CD8-positive, alpha-beta T cell (primary cell): ENCODE measurements at regions of chr1 and their contacts with region 1.

Region 1: DNA sequence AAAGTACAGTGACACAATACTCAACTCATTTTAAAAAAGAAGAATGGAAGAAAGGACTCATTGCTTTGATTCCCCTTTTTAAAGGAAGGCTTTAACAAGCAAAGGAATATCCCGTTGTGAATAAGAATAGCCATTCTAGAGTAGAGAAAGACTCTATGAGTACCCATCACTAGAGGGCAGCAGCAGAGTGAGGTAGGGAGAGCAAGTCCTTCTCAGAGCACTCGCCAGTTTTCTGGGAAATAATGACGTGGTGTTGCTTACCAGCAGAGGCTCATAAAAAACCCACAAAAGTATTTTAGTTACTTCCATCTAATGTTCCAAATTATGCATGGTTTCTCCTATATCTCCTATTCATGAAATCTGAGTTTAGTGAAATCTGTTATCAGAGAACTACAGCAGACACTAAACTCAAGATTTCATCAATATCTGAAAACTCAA is 74.6 kb downstream of the USP24 start:
- DNase-seq: peak; percentile 25 to 88 (median 69)
- ATAC-seq: peak; percentile 94
- H3K4me3 ChIP-seq: no peak overlapping the region
- H3K4me3 Mint-ChIP-seq: no peak overlapping the region
- H3K27ac ChIP-seq: no peak overlapping the region
- H3K27ac Mint-ChIP-seq: peak overlapping the region; percentile 53
- H3K4me1 ChIP-seq: no peaks in the 10 kb centered on the region
- H3K4me1 Mint-ChIP-seq: peaks cover 15% of the 10 kb centered on the region
- H3K27me3 ChIP-seq: no peaks in the 10 kb centered on the region
- H3K27me3 Mint-ChIP-seq: no peaks in the 10 kb centered on the region
- CTCF ChIP-seq: peak; percentile 82

Region 2: GRCh38 chr1:54671985-54672608 is 468.5 kb before region 1 on chr1:
- CTCF ChIA-PET with region 1: no interaction called
- POLR2A ChIA-PET with region 1: no interaction called
- intact Hi-C with region 1: no loop called
- DNase-seq: peak; percentile 39 to 77 (median 63)
- ATAC-seq: peak; percentile 85
- H3K4me3 ChIP-seq: no peak overlapping the region
- H3K4me3 Mint-ChIP-seq: no peak overlapping the region
- H3K27ac ChIP-seq: no peak overlapping the region
- H3K27ac Mint-ChIP-seq: no peak overlapping the region
- H3K4me1 ChIP-seq: no peaks in the 10 kb centered on the region
- H3K4me1 Mint-ChIP-seq: no peaks in the 10 kb centered on the region
- H3K27me3 ChIP-seq: no peaks in the 10 kb centered on the region
- H3K27me3 Mint-ChIP-seq: no peaks in the 10 kb centered on the region
- CTCF ChIP-seq: peak; percentile 69

Region 3: GRCh38 chr1:55156093-55156492 is 15.5 kb after region 1 on chr1:
- CTCF ChIA-PET with region 1: interaction called, 6 read pairs
- POLR2A ChIA-PET with region 1: interaction called, 4 read pairs
- intact Hi-C with region 1: loop called in 1 of 2 experiments (anchors 2 kb)
- DNase-seq: no peak
- ATAC-seq: no peak
- H3K4me3 ChIP-seq: no peak overlapping the region
- H3K4me3 Mint-ChIP-seq: no peak overlapping the region
- H3K27ac ChIP-seq: no peak overlapping the region
- H3K27ac Mint-ChIP-seq: peak overlapping the region; percentile 76
- H3K4me1 ChIP-seq: peaks cover 15% of the 10 kb centered on the region
- H3K4me1 Mint-ChIP-seq: peaks cover 30% of the 10 kb centered on the region
- H3K27me3 ChIP-seq: no peaks in the 10 kb centered on the region
- H3K27me3 Mint-ChIP-seq: no peaks in the 10 kb centered on the region
- CTCF ChIP-seq: no peak

Region 4: GRCh38 chr1:55185832-55186231 is 45.3 kb after region 1 on chr1:
- CTCF ChIA-PET with region 1: no interaction called
- POLR2A ChIA-PET with region 1: no interaction called
- intact Hi-C with region 1: no loop called
- DNase-seq: no peak
- ATAC-seq: no peak
- H3K4me3 ChIP-seq: no peak overlapping the region
- H3K4me3 Mint-ChIP-seq: no peak overlapping the region
- H3K27ac ChIP-seq: no peak overlapping the region
- H3K27ac Mint-ChIP-seq: no peak overlapping the region
- H3K4me1 ChIP-seq: no peaks in the 10 kb centered on the region
- H3K4me1 Mint-ChIP-seq: peaks cover 64% of the 10 kb centered on the region
- H3K27me3 ChIP-seq: no peaks in the 10 kb centered on the region
- H3K27me3 Mint-ChIP-seq: no peaks in the 10 kb centered on the region
- CTCF ChIP-seq: no peak

Region 5: DNA sequence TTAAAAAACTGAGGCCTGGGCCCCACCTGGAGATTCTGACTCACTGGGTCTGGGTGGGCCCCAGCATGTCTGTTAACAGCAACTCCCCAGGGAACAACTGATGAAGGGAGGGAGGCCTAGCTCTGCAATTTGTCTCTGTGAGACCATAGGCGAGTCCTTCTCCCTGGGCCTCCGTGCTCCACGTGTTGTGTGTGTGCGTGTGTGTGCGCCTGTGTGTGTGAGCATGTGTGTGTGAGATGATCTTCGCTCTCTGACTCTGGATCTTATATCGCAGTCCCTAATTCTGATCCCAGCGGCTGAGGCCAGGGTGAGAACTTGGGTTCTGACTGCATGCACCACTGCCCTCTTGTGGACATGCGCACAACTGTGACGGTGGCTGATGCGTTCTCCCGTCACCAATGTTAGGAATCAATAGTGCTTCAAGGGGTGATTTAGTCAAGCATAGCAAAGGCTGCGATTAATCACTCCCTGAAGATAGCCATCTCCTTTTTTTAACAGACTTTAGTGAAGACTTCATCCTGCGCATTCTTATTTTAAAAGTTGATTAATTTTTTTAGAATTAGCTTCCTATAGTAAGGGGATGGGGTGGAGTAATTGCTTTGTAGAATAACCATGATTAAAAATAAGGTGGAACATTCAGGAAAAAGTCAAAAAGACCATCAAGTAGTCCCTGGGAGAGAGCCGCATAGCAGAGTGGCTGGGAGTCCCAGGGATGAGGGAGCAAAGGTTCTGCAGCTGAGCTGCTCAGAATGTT is 137.0 kb after region 1 on chr1:
- CTCF ChIA-PET with region 1: interaction called, 119 read pairs
- POLR2A ChIA-PET with region 1: interaction called, 3 read pairs
- intact Hi-C with region 1: loop called (anchors 1 kb)
- DNase-seq: peak; percentile 60 to 87 (median 79)
- ATAC-seq: peak; percentile 96
- H3K4me3 ChIP-seq: no peak overlapping the region
- H3K4me3 Mint-ChIP-seq: no peak overlapping the region
- H3K27ac ChIP-seq: no peak overlapping the region
- H3K27ac Mint-ChIP-seq: no peak overlapping the region
- H3K4me1 ChIP-seq: no peaks in the 10 kb centered on the region
- H3K4me1 Mint-ChIP-seq: peaks cover 7% of the 10 kb centered on the region
- H3K27me3 ChIP-seq: no peaks in the 10 kb centered on the region
- H3K27me3 Mint-ChIP-seq: no peaks in the 10 kb centered on the region
- CTCF ChIP-seq: peak; percentile 84

Region 6: DNA sequence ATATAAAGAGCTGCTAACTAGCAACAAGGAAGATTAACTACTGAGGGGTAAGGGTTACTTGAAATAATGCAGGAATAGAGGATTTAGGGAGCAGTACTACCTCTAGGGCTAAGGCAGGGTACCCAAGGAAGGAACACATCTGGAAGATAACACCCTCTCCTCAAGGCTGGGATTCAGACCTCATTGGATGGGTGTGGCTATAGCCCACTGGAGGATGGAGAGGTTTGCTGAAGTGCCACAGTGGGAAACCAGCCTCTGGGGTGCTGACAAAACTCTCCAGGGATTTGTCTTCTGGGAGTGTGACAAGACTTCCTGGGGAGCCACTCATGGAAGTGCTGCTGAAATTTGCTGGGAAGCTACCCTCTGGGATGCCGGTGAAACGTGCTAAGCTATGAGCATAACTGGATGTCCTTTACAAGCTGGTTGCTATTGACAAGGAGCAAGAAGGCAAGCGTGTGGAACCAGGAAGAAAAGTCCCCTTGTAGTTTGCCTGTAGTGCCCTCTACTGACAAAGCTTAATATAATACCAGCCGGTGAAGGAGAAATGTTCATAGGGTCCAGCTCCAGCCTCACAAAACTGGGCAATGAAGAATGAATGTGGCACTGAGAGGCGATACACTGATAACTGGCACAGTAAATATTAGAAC is 197.4 kb after region 1 on chr1:
- CTCF ChIA-PET with region 1: interaction called, 4 read pairs
- POLR2A ChIA-PET with region 1: no interaction called
- intact Hi-C with region 1: loop called (anchors 2 kb)
- DNase-seq: peak in 2 of 9 experiments; percentile 21 to 35
- ATAC-seq: no peak
- H3K4me3 ChIP-seq: no peak overlapping the region
- H3K4me3 Mint-ChIP-seq: no peak overlapping the region
- H3K27ac ChIP-seq: no peak overlapping the region
- H3K27ac Mint-ChIP-seq: no peak overlapping the region
- H3K4me1 ChIP-seq: no peaks in the 10 kb centered on the region
- H3K4me1 Mint-ChIP-seq: no peaks in the 10 kb centered on the region
- H3K27me3 ChIP-seq: no peaks in the 10 kb centered on the region
- H3K27me3 Mint-ChIP-seq: no peaks in the 10 kb centered on the region
- CTCF ChIP-seq: no peak

Region 7: DNA sequence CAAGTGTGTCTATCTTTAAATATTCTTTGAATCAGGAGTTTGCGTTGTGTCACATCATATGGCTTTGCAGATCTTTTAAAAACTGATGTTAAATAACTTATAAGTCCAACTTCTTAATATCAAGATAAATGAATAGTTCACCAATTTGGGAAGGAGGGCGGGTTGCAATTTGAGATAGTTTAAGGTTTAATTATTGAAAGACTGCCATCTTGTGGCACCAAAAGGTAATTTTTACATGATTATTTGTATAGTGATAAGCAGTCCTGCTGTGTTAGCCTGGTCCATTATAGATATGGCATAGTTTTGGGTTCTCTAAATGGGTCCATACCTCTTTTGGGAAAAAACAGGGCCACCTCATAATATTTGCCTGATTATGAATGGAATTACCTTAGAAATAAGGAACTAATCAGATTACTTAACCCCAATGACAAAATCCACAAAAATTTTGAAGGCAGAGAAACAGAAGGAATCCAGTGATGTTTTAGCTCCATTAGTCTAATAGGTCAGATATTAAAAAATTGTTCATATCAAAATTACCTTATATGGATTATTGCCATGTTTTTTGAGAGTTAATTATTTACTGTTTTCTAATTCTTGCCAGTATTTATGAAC is 1568.8 kb after region 1 on chr1:
- CTCF ChIA-PET with region 1: interaction called, 3 read pairs
- POLR2A ChIA-PET with region 1: no interaction called
- intact Hi-C with region 1: loop called in 1 of 2 experiments (anchors 5 kb)
- DNase-seq: peak in 2 of 9 experiments; percentile 26 to 42
- ATAC-seq: no peak
- H3K4me3 ChIP-seq: no peak overlapping the region
- H3K4me3 Mint-ChIP-seq: no peak overlapping the region
- H3K27ac ChIP-seq: no peak overlapping the region
- H3K27ac Mint-ChIP-seq: no peak overlapping the region
- H3K4me1 ChIP-seq: no peaks in the 10 kb centered on the region
- H3K4me1 Mint-ChIP-seq: no peaks in the 10 kb centered on the region
- H3K27me3 ChIP-seq: no peaks in the 10 kb centered on the region
- H3K27me3 Mint-ChIP-seq: peaks cover 14% of the 10 kb centered on the region
- CTCF ChIP-seq: peak; percentile 54